Tibial artery (tissue), 4 donors: ENCODE measurements at regions of chr10 and their contacts with region 1.

Region 1: DNA sequence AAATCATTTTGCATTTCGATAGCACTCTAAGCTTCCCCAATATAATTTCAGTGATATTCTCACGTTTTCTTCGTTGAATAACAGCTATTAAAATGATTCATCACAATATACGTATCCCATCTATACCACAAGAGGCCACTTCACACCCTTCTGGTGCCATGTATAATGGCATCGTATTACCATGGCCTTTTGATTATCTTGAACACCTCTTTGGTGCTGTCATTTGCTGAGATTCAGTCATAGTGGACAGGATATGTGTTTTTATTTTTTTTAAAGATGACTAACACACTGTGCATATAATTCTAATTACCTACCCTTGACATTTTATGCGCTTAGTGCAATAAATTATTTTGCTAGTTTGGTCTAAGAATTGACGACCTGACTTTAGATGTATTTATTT is 6.7 kb upstream of the INSYN2A start:
- DNase-seq: no peak
- H3K4me3 ChIP-seq: no peak overlapping the region
- H3K27ac ChIP-seq: no peak overlapping the region
- H3K4me1 ChIP-seq: no peaks in the 10 kb centered on the region
- H3K27me3 ChIP-seq: no peaks in the 10 kb centered on the region
- CTCF ChIP-seq: no peak

Region 2: GRCh38 chr10:127133672-127134500 is 69.2 kb before region 1 on chr10:
- intact Hi-C with region 1: loop called (anchors 2 kb)
- DNase-seq: no peak
- H3K4me3 ChIP-seq: no peak overlapping the region
- H3K27ac ChIP-seq: no peak overlapping the region
- H3K4me1 ChIP-seq: no peaks in the 10 kb centered on the region
- H3K27me3 ChIP-seq: no peaks in the 10 kb centered on the region
- CTCF ChIP-seq: no peak

Region 3: GRCh38 chr10:127243490-127244272 is 40.6 kb after region 1 on chr10:
- intact Hi-C with region 1: no loop called
- DNase-seq: no peak
- H3K4me3 ChIP-seq: no peak overlapping the region
- H3K27ac ChIP-seq: no peak overlapping the region
- H3K4me1 ChIP-seq: no peaks in the 10 kb centered on the region
- H3K27me3 ChIP-seq: no peaks in the 10 kb centered on the region
- CTCF ChIP-seq: peak in 1 of 2 experiments; percentile 27